K562 (cell line): ENCODE measurements at regions of chr12 and their contacts with region 1.

Region 1: GRCh38 chr12:13734584-13735152 is 246.7 kb downstream of the GRIN2B start:
- DNase-seq: no peak
- ATAC-seq: no peak
- H3K4me3 ChIP-seq: no peak overlapping the region
- H3K27ac ChIP-seq: no peak overlapping the region
- H3K4me1 ChIP-seq: no peaks in the 10 kb centered on the region
- H3K27me3 ChIP-seq: no peaks in the 10 kb centered on the region
- CTCF ChIP-seq: no peak
- EP300 ChIP-seq: no peak
- POLR2A ChIP-seq: no peak
- RAD21 ChIP-seq: no peak

Region 2: GRCh38 chr12:13941258-13942249 is 206.9 kb after region 1 on chr12:
- CTCF ChIA-PET with region 1: no interaction called
- POLR2A ChIA-PET with region 1: no interaction called
- in situ Hi-C with region 1: no loop called
- intact Hi-C with region 1: loop called (anchors 10 kb)
- DNase-seq: peak; percentile 8 to 38 (median 12)
- ATAC-seq: peak; percentile 72
- H3K4me3 ChIP-seq: no peak overlapping the region
- H3K27ac ChIP-seq: no peak overlapping the region
- H3K4me1 ChIP-seq: no peaks in the 10 kb centered on the region
- H3K27me3 ChIP-seq: no peaks in the 10 kb centered on the region
- CTCF ChIP-seq: peak in 2 of 3 experiments; percentile 33 to 47; a peak in 2 of 6 replicates
- EP300 ChIP-seq: no peak
- POLR2A ChIP-seq: no peak
- RAD21 ChIP-seq: peak in 1 of 2 experiments; percentile 41; a peak in 2 of 4 replicates

Region 3: DNA sequence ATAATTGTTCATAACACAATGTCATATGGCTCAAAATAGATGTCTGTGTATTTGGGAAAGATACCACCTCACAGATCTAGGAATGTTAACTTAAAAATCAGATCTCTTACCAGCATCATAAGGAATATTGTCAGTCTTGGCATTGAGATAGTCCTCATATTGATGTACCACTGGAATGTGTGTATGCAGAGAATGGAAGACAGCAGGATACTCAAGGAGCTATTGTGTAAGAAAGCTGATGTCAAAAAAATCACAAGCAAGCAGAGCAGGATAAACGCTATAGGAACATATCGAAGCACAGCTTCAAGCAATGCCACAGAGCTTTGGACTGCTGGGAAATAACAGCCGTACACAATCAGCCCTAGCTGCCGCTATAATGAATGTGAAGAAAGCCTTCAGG is 291.9 kb after region 1 on chr12:
- CTCF ChIA-PET with region 1: no interaction called
- POLR2A ChIA-PET with region 1: no interaction called
- in situ Hi-C with region 1: no loop called
- intact Hi-C with region 1: no loop called
- DNase-seq: no peak
- ATAC-seq: no peak
- H3K4me3 ChIP-seq: no peak overlapping the region
- H3K27ac ChIP-seq: no peak overlapping the region
- H3K4me1 ChIP-seq: no peaks in the 10 kb centered on the region
- H3K27me3 ChIP-seq: no peaks in the 10 kb centered on the region
- CTCF ChIP-seq: no peak
- EP300 ChIP-seq: no peak
- POLR2A ChIP-seq: no peak
- RAD21 ChIP-seq: no peak